Activated naive CD4-positive, alpha-beta T cell treated with anti-CD3 and anti-CD28 coated beads for 36 hours (primary cell): ENCODE measurements at regions of chr3 and their contacts with region 1.

Region 1: GRCh38 chr3:28241221-28242160 is at the start of gene CMC1:
- DNase-seq: peak; percentile 97
- H3K4me3 Mint-ChIP-seq: peak within 1 kb of the TSS; percentile 88
- H3K27ac Mint-ChIP-seq: peak within 1 kb of the TSS; percentile 90
- H3K4me1 Mint-ChIP-seq: peaks cover 45% of the 10 kb centered on the region
- H3K27me3 Mint-ChIP-seq: no peaks in the 10 kb centered on the region
- total RNA-seq, gene CMC1: 27.6 to 28.6 TPM

Region 2: DNA sequence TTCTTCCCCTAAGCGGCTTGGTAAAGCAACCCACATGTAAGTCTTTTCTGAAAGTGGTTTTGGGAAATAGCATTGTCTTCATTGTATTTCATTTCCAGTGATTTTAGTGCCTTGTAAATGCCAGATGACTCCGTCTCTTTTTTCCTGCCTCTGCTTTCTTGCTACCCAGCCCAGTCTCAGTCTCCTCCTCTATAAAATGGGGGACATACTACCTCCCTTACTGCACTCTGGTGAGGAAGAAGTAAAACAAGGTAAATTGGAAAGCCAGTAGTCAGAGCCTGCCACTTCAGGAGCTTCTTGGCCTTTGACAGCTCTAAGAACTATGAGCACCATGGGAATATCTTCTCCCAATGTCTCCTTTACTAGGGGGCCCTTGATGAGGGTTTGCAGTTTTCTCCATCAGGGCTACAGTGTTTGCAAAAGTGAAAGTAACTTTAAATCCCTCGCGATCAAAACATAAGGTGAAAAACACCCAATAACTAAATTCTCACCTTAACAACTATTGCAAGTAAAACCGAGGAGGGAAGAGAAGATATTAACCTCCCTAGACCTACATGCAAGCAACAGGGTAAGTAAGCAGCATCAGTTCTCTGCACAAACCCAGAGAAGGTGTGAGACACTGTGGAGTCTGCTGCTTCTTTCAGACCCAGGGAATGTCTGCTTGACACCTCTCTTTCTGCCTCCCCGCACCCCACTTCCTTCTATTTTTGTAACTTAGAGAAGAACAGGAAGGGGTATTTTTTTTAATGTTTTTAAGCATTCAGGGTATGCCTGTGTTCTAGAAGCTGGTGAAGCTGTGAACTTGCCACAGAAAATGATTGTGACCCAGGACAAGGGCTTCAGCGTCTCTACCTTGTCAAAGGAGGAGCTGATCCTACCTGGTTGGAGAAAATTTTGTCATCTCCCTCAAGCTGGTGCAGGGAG is 360.3 kb before region 1 on chr3:
- CTCF ChIA-PET with region 1: no interaction called
- intact Hi-C with region 1: loop called (anchors 2 kb)
- DNase-seq: peak; percentile 41
- H3K4me3 Mint-ChIP-seq: peak overlapping the region; percentile 73
- H3K27ac Mint-ChIP-seq: peak overlapping the region; percentile 78
- H3K4me1 Mint-ChIP-seq: peaks cover 63% of the 10 kb centered on the region
- H3K27me3 Mint-ChIP-seq: no peaks in the 10 kb centered on the region

Region 3: DNA sequence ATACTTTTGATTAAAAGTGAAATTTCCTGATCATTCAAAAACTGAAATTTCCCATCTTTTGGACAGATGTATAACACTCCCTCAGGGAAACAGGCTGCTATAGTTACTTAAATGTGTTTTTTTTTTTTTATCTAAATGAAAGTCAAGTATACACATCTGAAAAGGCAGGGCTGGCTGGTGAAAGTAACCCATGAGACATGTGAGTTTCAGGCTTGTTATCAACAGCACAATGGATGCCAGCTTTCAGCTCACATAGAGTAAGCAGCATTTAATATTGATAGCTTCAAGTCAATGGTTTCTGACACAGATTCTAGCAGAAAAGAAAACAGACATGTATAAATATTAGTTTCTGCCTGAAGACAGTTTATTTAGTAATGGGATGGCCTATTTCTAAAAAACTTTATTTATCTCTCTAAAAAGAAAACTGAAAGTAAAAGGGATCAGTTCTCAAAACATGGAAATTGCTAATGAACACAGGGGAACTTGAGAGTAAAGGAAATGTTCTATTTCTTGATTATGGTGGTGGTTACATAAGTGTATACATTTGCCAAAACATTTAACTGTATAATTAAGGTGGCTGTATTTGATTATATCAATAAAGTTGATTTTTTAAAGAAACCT is 89.8 kb before region 1 on chr3:
- CTCF ChIA-PET with region 1: no interaction called
- intact Hi-C with region 1: loop called (anchors 1 kb)
- DNase-seq: peak; percentile 13
- H3K4me3 Mint-ChIP-seq: no peak overlapping the region
- H3K27ac Mint-ChIP-seq: no peak overlapping the region
- H3K4me1 Mint-ChIP-seq: peaks cover 9% of the 10 kb centered on the region
- H3K27me3 Mint-ChIP-seq: no peaks in the 10 kb centered on the region

Region 4: GRCh38 chr3:28218071-28218916 is 23.2 kb before region 1 on chr3:
- CTCF ChIA-PET with region 1: no interaction called
- intact Hi-C with region 1: loop called (anchors 2 kb)
- DNase-seq: no peak
- H3K4me3 Mint-ChIP-seq: no peak overlapping the region
- H3K27ac Mint-ChIP-seq: no peak overlapping the region
- H3K4me1 Mint-ChIP-seq: peaks cover 17% of the 10 kb centered on the region
- H3K27me3 Mint-ChIP-seq: no peaks in the 10 kb centered on the region